Activated CD4-positive, alpha-beta T cell treated with anti-CD3 and anti-CD28 coated beads, Interleukin-2, amount 10 ng/mL, durations not matched to agents 7 days and 5 days (primary cell): ENCODE measurements at regions of chr20 and their contacts with region 1.

Region 1: DNA sequence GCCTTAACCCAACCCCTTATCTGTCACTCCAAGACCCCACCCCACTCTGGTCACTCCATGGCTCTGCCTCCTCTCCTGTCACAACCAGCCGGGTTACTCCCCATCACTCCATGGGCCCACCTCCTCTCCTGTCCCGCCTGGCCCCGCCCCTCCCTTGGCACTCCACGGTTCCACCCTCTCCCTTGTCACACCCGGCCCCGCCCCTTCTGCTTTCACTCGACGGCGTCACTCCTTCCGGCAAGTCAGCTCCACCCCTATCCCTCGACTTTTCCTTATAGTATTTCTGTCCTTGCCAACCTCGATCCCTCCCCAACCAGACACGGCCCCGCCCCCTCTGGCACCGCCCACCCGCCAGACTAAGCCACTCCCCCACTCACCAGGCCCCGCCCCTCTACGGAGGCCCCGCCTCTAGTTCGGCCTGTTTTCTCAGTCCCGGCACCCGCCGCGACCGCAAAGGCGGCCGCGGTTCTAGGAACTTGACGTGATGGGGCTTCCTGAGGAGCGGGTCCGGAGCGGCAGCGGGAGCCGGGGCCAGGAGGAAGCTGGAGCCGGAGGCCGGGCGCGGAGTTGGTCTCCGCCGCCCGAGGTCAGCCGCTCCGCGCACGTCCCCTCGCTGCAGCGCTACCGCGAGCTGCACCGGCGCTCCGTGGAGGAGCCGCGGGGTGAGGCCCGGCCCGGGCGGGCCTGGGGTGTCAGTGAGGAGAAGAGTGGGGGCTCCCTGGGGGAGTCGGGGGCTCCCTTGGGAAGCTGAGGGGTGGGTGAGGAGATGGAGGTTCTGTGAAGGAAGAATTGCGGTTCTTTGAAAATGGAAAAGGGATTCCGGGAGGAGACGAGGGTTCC is at the start of gene ACSS2:
- DNase-seq: peak; percentile 99
- H3K4me3 Mint-ChIP-seq: peak within 1 kb of the TSS; percentile 93
- H3K27ac Mint-ChIP-seq: peak within 1 kb of the TSS; percentile 90
- H3K4me1 Mint-ChIP-seq: peaks cover 68% of the 10 kb centered on the region
- H3K27me3 Mint-ChIP-seq: peaks cover 3% of the 10 kb centered on the region
- total RNA-seq, gene ACSS2: 33.0 to 36.1 TPM

Region 2: GRCh38 chr20:34888468-34888867 is 12.1 kb after region 1 on chr20:
- CTCF ChIA-PET with region 1: interaction called, 29 read pairs
- POLR2A ChIA-PET with region 1: no interaction called
- DNase-seq: no peak
- H3K4me3 Mint-ChIP-seq: no peak overlapping the region
- H3K27ac Mint-ChIP-seq: no peak overlapping the region
- H3K4me1 Mint-ChIP-seq: peaks cover 42% of the 10 kb centered on the region
- H3K27me3 Mint-ChIP-seq: no peaks in the 10 kb centered on the region

Region 3: GRCh38 chr20:34955232-34956040 is 79.1 kb after region 1 on chr20 and contains the starts of genes GSS and MYH7B:
- CTCF ChIA-PET with region 1: interaction called, 19 read pairs
- POLR2A ChIA-PET with region 1: interaction called, 3 read pairs
- DNase-seq: peak; percentile 96
- H3K4me3 Mint-ChIP-seq: peak within 1 kb of the TSS; percentile 96
- H3K27ac Mint-ChIP-seq: peak within 1 kb of the TSS; percentile 94
- H3K4me1 Mint-ChIP-seq: peaks cover 31% of the 10 kb centered on the region
- H3K27me3 Mint-ChIP-seq: no peaks in the 10 kb centered on the region
- total RNA-seq, gene GSS: 48.7 to 49.1 TPM
- total RNA-seq, gene MYH7B: 0.04 to 0.27 TPM